ENCODE measurements at regions of chr12 and their contacts with region 1.

Region 1: GRCh38 chr12:48795480-48796455 is 6.9 kb upstream of the ADCY6 start:
- DNase-seq: peak in 4 of 5 donors; percentile 43 to 56 (median 51)
- H3K4me3 ChIP-seq: no peak overlapping the region
- H3K4me3 Mint-ChIP-seq: no peak overlapping the region
- H3K27ac ChIP-seq: no peak overlapping the region
- H3K27ac Mint-ChIP-seq: no peak overlapping the region
- H3K4me1 ChIP-seq: no peaks in the 10 kb centered on the region
- H3K4me1 Mint-ChIP-seq: peaks cover 0 to 4% (median 3%) of the 10 kb centered on the region in 4 donors
- H3K27me3 ChIP-seq: no peaks in the 10 kb centered on the region
- H3K27me3 Mint-ChIP-seq: peaks cover 0 to 7% of the 10 kb centered on the region in 2 donors

Region 2: GRCh38 chr12:48542300-48542928 is 253.4 kb before region 1 on chr12:
- CTCF ChIA-PET with region 1: interaction called, 11 read pairs
- POLR2A ChIA-PET with region 1: no interaction called
- intact Hi-C with region 1: no loop called
- DNase-seq: peak in 4 of 5 donors; percentile 14 to 40 (median 25)
- H3K4me3 ChIP-seq: no peak overlapping the region
- H3K4me3 Mint-ChIP-seq: no peak overlapping the region
- H3K27ac ChIP-seq: no peak overlapping the region
- H3K27ac Mint-ChIP-seq: no peak overlapping the region
- H3K4me1 ChIP-seq: no peaks in the 10 kb centered on the region
- H3K4me1 Mint-ChIP-seq: peaks cover 0 to 3% (median 0%) of the 10 kb centered on the region in 4 donors
- H3K27me3 ChIP-seq: no peaks in the 10 kb centered on the region
- H3K27me3 Mint-ChIP-seq: peaks cover 0 to 10% of the 10 kb centered on the region in 2 donors

Region 3: DNA sequence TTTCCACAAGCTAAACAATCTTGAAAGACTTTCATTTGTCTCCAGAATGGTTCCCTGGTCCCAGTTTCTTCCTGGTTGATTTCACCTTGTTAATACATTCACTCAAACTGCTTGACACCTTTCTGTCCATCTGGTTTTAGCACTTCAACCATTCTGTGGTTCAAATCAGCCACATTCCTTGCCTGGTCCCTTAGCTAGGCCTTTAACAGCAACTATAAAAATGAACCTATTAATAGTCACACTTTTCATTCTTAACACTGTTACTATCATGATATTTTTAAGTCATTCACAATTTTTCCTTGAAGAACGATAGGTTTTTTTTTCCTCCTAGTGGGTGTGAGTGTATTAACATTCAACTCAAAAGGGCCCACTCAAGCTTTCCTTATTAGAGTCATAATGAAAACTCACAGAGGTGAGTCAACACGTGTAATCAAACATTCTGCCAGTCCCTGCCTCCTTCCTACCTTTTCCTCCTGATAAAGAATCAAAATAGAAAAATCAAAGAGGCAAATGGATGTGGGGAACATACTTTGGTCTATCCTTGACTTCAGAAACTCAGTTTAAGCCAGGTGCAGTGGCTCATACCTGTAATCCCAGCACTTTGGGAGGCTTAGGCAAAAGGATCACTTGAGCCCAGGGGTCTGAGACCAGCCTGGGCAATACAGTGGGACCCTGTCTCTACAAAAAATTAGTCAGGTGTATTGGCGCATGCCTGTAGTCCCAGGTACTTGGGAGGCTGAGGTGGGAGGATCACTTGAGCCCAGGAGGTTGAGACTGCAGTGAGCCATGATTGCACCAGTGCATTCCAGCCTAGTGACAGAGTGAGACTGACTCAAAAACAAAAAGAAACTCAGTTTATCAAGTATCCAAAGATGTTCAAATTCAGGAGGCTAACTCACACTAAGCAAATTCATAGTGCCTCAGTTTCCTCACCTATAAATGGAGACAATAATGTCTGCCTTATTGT is 44.7 kb before region 1 on chr12:
- CTCF ChIA-PET with region 1: interaction called, 156 read pairs
- POLR2A ChIA-PET with region 1: no interaction called
- intact Hi-C with region 1: loop called (anchors 1 kb)
- DNase-seq: no peak
- H3K4me3 ChIP-seq: no peak overlapping the region
- H3K4me3 Mint-ChIP-seq: no peak overlapping the region
- H3K27ac ChIP-seq: no peak overlapping the region
- H3K27ac Mint-ChIP-seq: peak overlapping the region in 2 of 7 donors; percentile 43 to 64
- H3K4me1 ChIP-seq: no peaks in the 10 kb centered on the region
- H3K4me1 Mint-ChIP-seq: peaks cover 0 to 1% (median 0%) of the 10 kb centered on the region in 4 donors
- H3K27me3 ChIP-seq: no peaks in the 10 kb centered on the region
- H3K27me3 Mint-ChIP-seq: peaks cover 0 to 1% of the 10 kb centered on the region in 2 donors

Region 4: DNA sequence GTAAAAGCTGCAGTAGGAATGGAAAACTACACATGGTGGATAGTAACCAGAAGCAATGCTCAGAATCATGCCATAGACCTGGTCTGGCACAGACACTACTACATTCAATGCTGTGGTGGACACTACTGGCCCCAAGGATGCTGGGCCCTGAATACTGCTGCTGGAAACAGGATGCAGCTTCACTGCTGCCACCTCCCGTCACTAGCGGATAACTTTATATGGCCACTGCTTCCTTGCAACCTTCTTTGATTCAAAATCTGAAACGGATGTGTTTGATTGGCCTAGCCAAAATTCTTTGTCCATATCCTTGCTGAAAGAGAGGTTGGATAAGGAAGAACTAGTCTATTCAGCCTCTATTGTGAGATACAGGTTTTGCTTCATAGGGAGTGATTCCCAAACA is 37.5 kb before region 1 on chr12:
- CTCF ChIA-PET with region 1: interaction called, 156 read pairs
- POLR2A ChIA-PET with region 1: no interaction called
- intact Hi-C with region 1: loop called (anchors 1 kb)
- DNase-seq: no peak
- H3K4me3 ChIP-seq: no peak overlapping the region
- H3K4me3 Mint-ChIP-seq: no peak overlapping the region
- H3K27ac ChIP-seq: no peak overlapping the region
- H3K27ac Mint-ChIP-seq: no peak overlapping the region
- H3K4me1 ChIP-seq: no peaks in the 10 kb centered on the region
- H3K4me1 Mint-ChIP-seq: no peaks in the 10 kb centered on the region
- H3K27me3 ChIP-seq: no peaks in the 10 kb centered on the region
- H3K27me3 Mint-ChIP-seq: no peaks in the 10 kb centered on the region

Region 5: DNA sequence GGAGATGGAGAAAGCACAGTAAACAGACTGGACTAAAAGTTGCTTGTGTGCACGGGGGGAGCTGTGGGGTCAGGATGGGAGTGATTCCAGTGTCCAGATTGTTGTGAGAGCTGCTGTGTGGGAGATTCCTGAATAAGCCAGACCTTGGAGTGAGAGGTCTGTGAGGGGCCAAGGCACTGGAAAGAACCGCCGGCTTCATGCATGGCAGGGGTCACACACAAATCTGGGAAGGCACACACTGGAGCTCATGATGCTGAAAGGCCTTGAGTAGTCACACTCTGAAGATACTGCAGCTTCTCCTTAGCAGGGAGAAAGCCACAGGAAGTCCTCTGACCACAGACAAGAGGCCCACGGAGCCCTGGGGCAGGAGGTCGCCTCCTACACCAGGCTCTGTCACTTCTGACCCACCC is 30.0 kb before region 1 on chr12:
- CTCF ChIA-PET with region 1: interaction called, 156 read pairs
- POLR2A ChIA-PET with region 1: interaction called, 3 read pairs
- intact Hi-C with region 1: no loop called
- DNase-seq: no peak
- H3K4me3 ChIP-seq: no peak overlapping the region
- H3K4me3 Mint-ChIP-seq: no peak overlapping the region
- H3K27ac ChIP-seq: no peak overlapping the region
- H3K27ac Mint-ChIP-seq: peak overlapping the region in 1 of 7 donors; percentile 32
- H3K4me1 ChIP-seq: no peaks in the 10 kb centered on the region
- H3K4me1 Mint-ChIP-seq: peaks cover 0 to 13% (median 6%) of the 10 kb centered on the region in 4 donors
- H3K27me3 ChIP-seq: no peaks in the 10 kb centered on the region
- H3K27me3 Mint-ChIP-seq: peaks cover 0 to 3% of the 10 kb centered on the region in 2 donors

Region 6: DNA sequence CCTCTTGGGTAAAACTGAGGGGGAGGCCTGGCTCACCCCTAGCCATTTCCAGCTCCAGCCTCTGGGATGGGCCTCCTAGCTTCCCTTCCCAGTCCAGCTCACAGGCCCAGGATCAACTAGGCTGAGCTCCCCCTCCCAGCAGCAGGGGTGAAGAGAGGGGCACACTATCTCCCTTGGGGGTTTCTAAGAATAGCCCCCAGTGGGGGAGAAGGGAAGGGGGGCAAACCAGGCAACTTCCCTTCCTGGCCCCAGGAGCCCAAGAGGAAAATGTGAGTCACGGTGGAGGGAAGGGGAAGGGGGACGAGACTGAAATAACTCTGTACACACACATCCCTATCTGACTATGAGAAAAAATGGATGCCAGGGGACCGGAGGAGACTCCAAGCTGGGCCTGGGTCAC is 15.9 kb before region 1 on chr12:
- CTCF ChIA-PET with region 1: interaction called, 22 read pairs
- POLR2A ChIA-PET with region 1: no interaction called
- intact Hi-C with region 1: no loop called
- DNase-seq: no peak
- H3K4me3 ChIP-seq: no peak overlapping the region
- H3K4me3 Mint-ChIP-seq: no peak overlapping the region
- H3K27ac ChIP-seq: no peak overlapping the region
- H3K27ac Mint-ChIP-seq: no peak overlapping the region
- H3K4me1 ChIP-seq: no peaks in the 10 kb centered on the region
- H3K4me1 Mint-ChIP-seq: no peaks in the 10 kb centered on the region
- H3K27me3 ChIP-seq: no peaks in the 10 kb centered on the region
- H3K27me3 Mint-ChIP-seq: peaks cover 0 to 11% of the 10 kb centered on the region in 2 donors

Region 7: GRCh38 chr12:48814262-48815125 is 18.7 kb after region 1 on chr12:
- CTCF ChIA-PET with region 1: interaction called, 53 read pairs
- POLR2A ChIA-PET with region 1: interaction called, 3 read pairs
- intact Hi-C with region 1: no loop called
- DNase-seq: peak; percentile 63 to 76 (median 66)
- H3K4me3 ChIP-seq: peak overlapping the region; percentile 87 to 94
- H3K4me3 Mint-ChIP-seq: peak overlapping the region; percentile 86 to 94 (median 92)
- H3K27ac ChIP-seq: peak overlapping the region; percentile 55
- H3K27ac Mint-ChIP-seq: peak overlapping the region in 6 of 7 donors; percentile 48 to 91 (median 78)
- H3K4me1 ChIP-seq: peaks cover 37% of the 10 kb centered on the region
- H3K4me1 Mint-ChIP-seq: peaks cover 20 to 58% (median 31%) of the 10 kb centered on the region in 4 donors
- H3K27me3 ChIP-seq: no peaks in the 10 kb centered on the region
- H3K27me3 Mint-ChIP-seq: no peaks in the 10 kb centered on the region

Measured in CD4-positive, alpha-beta memory T cell (primary cell).